Caco-2 (cell line): ENCODE measurements at regions of chr10 and their contacts with region 1.

Region 1: DNA sequence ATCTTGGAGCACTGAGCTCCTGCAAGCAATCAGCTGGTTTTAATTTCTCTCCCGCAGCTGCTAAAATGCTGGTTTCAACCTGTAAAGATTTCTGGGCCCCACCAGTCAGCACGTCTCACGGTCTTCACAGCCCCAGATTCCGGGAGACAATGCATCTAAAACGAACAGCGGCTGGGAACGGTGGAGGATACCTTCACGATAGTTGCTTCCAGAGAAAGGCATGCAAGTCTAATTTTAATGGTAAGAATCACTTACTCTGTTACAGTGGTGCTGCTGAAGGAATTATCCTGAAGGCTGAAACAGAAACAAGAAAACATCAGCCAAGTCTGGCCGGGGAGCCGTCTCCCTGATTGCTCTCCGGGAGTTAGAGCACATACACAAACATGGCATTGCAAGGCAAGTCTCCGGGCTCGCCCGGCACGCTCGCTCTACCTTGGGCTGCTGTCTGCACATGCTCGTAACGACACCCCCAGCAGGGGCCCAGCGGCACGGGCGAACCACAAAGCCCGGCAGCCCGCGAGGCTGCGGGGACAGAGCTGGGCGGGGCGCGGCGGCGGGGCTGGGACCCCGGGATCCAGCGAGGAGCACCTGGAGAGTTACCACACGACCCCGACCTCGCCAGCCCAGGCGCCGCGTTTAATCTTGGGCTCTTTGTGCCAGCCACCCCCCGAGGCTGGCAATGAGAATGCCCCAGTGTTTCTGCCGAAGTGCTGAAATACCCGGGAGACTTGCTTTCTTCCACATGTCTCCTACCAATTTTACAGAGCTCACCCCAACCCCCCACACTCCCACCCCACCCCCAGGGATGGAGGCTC is at the start of gene FAM13C:
- DNase-seq: peak; percentile 79 to 86
- H3K4me3 ChIP-seq: peak within 1 kb of the TSS; percentile 47
- H3K4me3 Mint-ChIP-seq: peak within 1 kb of the TSS; percentile 80
- H3K27ac Mint-ChIP-seq: no peak within 1 kb of the TSS
- H3K4me1 ChIP-seq: peaks cover 9% of the 10 kb centered on the region
- H3K4me1 Mint-ChIP-seq: peaks cover 7% of the 10 kb centered on the region
- H3K27me3 ChIP-seq: no peaks in the 10 kb centered on the region
- H3K27me3 Mint-ChIP-seq: peaks cover 15% of the 10 kb centered on the region
- CTCF ChIP-seq: peak in 1 of 2 experiments; percentile 2
- total RNA-seq, gene FAM13C: 0.18 and 0.42 TPM in 2 replicates

Region 2: GRCh38 chr10:59240582-59241183 is 121.7 kb before region 1 on chr10:
- CTCF ChIA-PET with region 1: no interaction called
- POLR2A ChIA-PET with region 1: no interaction called
- intact Hi-C with region 1: loop called (anchors 5 kb)
- DNase-seq: peak in 1 of 2 experiments; percentile 69
- H3K4me3 ChIP-seq: no peak overlapping the region
- H3K4me3 Mint-ChIP-seq: no peak overlapping the region
- H3K27ac Mint-ChIP-seq: no peak overlapping the region
- H3K4me1 ChIP-seq: no peaks in the 10 kb centered on the region
- H3K4me1 Mint-ChIP-seq: peaks cover 13% of the 10 kb centered on the region
- H3K27me3 ChIP-seq: no peaks in the 10 kb centered on the region
- H3K27me3 Mint-ChIP-seq: no peaks in the 10 kb centered on the region
- CTCF ChIP-seq: peak; percentile 82 to 89

Region 3: DNA sequence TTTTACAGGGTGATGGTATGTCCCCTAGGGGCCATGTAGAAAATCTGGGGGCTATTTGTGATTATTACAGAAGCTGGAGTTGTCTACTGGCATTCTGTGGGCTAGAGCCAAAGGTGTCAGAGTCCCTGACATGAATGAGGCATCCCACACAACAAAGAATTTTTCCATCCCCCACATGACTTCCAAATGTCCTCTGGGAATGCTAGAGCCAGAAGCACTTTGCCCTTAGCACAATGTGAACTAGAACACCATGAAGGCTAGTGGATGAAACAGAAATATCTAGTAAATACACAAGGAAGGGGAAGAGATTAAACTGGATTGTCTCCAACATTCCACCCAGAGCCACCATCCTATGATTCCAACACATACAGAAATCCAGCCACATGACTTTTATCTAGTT is 46.9 kb before region 1 on chr10:
- CTCF ChIA-PET with region 1: no interaction called
- POLR2A ChIA-PET with region 1: interaction called, 14 read pairs
- intact Hi-C with region 1: no loop called
- DNase-seq: no peak
- H3K4me3 ChIP-seq: no peak overlapping the region
- H3K4me3 Mint-ChIP-seq: no peak overlapping the region
- H3K27ac Mint-ChIP-seq: no peak overlapping the region
- H3K4me1 ChIP-seq: no peaks in the 10 kb centered on the region
- H3K4me1 Mint-ChIP-seq: no peaks in the 10 kb centered on the region
- H3K27me3 ChIP-seq: no peaks in the 10 kb centered on the region
- H3K27me3 Mint-ChIP-seq: no peaks in the 10 kb centered on the region
- CTCF ChIP-seq: no peak

Region 4: DNA sequence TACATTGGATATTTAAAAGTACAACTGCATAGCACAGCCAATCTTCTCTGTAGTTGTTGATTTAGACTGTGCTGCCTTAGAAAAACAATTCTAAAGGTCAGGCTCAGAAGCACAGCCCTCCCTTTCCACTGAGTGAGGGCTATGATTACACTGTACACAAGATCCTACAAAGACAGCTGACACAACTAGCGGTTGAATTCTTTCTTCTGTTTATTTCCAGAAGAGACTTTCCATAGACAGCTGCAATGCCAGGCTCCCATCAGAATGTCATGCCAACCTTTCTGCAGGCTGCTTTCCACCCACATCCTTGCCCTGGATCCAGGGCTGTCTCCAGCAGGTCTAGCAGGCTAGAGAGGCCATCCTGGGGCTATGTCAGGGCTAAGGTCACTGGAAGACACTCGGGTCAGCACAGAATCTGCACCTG is 39.3 kb before region 1 on chr10:
- CTCF ChIA-PET with region 1: no interaction called
- POLR2A ChIA-PET with region 1: no interaction called
- intact Hi-C with region 1: loop called (anchors 2 kb)
- DNase-seq: peak in 1 of 2 experiments; percentile 42
- H3K4me3 ChIP-seq: no peak overlapping the region
- H3K4me3 Mint-ChIP-seq: no peak overlapping the region
- H3K27ac Mint-ChIP-seq: no peak overlapping the region
- H3K4me1 ChIP-seq: peaks cover 12% of the 10 kb centered on the region
- H3K4me1 Mint-ChIP-seq: peaks cover 7% of the 10 kb centered on the region
- H3K27me3 ChIP-seq: no peaks in the 10 kb centered on the region; the same call in 1 of the 2 replicates
- H3K27me3 Mint-ChIP-seq: peaks cover 2% of the 10 kb centered on the region
- CTCF ChIP-seq: no peak